SK-N-SH (cell line): ENCODE measurements at regions of chr17 and their contacts with region 1.

Region 1: DNA sequence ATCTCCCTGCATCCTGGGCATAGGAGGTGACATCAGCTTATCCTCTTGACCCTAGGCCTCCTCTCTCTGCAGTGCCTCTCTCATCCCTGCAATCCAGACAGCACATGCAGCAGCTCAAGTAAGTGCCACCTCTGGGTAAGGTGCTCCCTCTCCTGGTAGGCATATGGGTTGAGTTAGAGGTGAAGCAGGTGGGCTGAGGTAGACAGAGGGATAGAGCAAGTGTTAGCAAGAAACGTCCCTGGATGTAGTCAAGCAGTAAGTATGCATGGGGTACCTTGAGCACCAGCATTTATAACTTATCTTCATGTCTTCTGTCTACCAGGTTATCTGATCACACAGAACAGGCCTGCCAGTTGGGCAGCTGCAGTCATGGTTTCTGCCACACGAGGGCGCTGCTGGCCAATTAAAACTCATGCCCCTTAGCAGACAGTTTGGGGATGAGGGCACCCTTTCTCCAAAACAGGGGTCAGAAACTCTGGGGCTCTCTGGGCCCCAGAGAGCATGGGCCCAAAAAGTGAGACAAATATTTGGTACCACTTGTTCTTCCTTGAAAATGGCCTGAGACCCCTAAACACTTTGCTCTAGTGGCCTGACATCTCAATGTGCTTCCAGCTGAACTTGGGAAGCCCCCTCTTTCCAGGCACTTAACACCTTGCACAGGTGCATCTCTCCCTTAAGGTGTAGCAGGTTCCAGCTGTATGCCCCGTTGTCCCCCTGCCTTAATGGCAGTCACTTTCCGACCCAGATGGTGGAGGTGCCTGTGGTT is 59.8 kb downstream of the NEUROD2 start:
- DNase-seq: peak; percentile 76
- H3K4me3 ChIP-seq: no peak overlapping the region; a peak in 1 of 4 replicates
- H3K27ac ChIP-seq: no peak overlapping the region
- H3K4me1 ChIP-seq: peaks cover 8 to 9% of the 10 kb centered on the region in 2 experiments; a peak in 1 of 4 replicates
- H3K27me3 ChIP-seq: no peaks in the 10 kb centered on the region
- CTCF ChIP-seq: peak; percentile 98
- EP300 ChIP-seq: no peak
- RAD21 ChIP-seq: peak; percentile 82

Region 2: GRCh38 chr17:39450847-39451581 is 96.9 kb before region 1 on chr17 and contains the start of gene MED1:
- CTCF ChIA-PET with region 1: no interaction called
- POLR2A ChIA-PET with region 1: no interaction called
- DNase-seq: peak; percentile 88
- H3K4me3 ChIP-seq: peak within 1 kb of the TSS; percentile 67 to 87
- H3K27ac ChIP-seq: peak within 1 kb of the TSS; percentile 77 to 85
- H3K4me1 ChIP-seq: peaks cover 4% of the 10 kb centered on the region in 2 experiments; a peak in 2 of 4 replicates
- H3K27me3 ChIP-seq: no peaks in the 10 kb centered on the region
- CTCF ChIP-seq: no peak
- EP300 ChIP-seq: no peak
- RAD21 ChIP-seq: no peak
- polyA plus RNA-seq, gene MED1: 12.3 and 19.9 TPM in 2 replicates

Region 3: DNA sequence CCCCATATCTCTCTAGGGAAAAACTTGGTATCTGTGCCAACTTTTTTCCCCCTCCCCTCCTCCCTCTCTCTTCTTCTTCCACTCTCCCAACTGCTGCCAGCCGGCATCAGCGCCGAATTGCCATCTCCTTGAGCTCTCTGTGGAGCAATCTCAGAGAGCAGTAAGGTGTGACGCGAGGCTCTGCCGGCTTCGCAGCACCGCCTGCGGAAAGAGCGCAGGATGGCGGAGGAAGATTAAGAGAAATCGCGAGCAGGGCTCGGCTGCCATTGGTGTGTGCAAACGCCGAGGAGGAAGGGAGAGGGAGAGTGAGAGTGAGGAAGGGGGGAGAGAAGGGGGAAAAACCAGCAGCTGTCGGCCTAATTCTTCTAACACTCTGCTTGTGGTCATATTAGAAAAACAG is 15.6 kb after region 1 on chr17:
- CTCF ChIA-PET with region 1: interaction called, 56 read pairs
- POLR2A ChIA-PET with region 1: no interaction called
- DNase-seq: peak; percentile 55
- H3K4me3 ChIP-seq: no peak overlapping the region
- H3K27ac ChIP-seq: no peak overlapping the region
- H3K4me1 ChIP-seq: peaks cover 0 to 7% of the 10 kb centered on the region in 2 experiments; a peak in 1 of 4 replicates
- H3K27me3 ChIP-seq: no peaks in the 10 kb centered on the region
- CTCF ChIP-seq: no peak
- EP300 ChIP-seq: no peak
- RAD21 ChIP-seq: no peak

Region 4: DNA sequence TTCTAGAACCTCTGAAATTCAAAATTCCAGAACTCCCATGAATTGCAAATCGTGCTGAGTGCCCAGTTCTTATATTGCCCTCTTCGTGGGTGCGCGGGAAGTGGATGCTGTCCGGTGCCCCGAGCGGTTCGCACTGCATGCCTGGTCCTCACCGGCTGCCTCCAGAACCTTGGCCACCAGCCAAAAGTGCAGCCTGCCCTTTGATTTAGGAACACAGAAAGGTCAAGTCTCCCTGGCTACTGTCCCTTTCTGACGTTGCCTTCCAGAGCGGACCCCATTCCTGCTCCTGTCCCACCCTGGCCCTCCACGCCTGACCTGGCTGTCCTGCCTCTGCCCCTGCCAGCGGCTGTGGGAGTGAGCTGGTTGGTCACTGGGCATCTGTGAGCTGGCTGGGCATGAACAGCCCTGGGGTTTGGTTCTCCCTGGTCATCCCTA is 50.2 kb after region 1 on chr17:
- CTCF ChIA-PET with region 1: interaction called, 17 read pairs
- POLR2A ChIA-PET with region 1: no interaction called
- DNase-seq: peak; percentile 74
- H3K4me3 ChIP-seq: no peak overlapping the region
- H3K27ac ChIP-seq: no peak overlapping the region
- H3K4me1 ChIP-seq: peaks cover 7 to 32% of the 10 kb centered on the region in 2 experiments
- H3K27me3 ChIP-seq: peaks cover 84% of the 10 kb centered on the region
- CTCF ChIP-seq: no peak
- EP300 ChIP-seq: no peak
- RAD21 ChIP-seq: no peak

Region 5: GRCh38 chr17:39636927-39637736 is 89.2 kb after region 1 on chr17 and contains the start of gene STARD3:
- CTCF ChIA-PET with region 1: interaction called, 18 read pairs
- POLR2A ChIA-PET with region 1: no interaction called
- DNase-seq: peak; percentile 96
- H3K4me3 ChIP-seq: peak within 1 kb of the TSS; percentile 88 to 97
- H3K27ac ChIP-seq: peak within 1 kb of the TSS; percentile 59 to 85
- H3K4me1 ChIP-seq: peaks cover 0 to 21% of the 10 kb centered on the region in 2 experiments; a peak in 2 of 4 replicates
- H3K27me3 ChIP-seq: no peaks in the 10 kb centered on the region
- CTCF ChIP-seq: no peak
- EP300 ChIP-seq: no peak
- RAD21 ChIP-seq: no peak
- polyA plus RNA-seq, gene STARD3: 76.8 and 78.0 TPM in 2 replicates

Region 6: GRCh38 chr17:39668199-39668966 is 120.5 kb after region 1 on chr17 and contains the start of gene PNMT:
- CTCF ChIA-PET with region 1: interaction called, 14 read pairs
- POLR2A ChIA-PET with region 1: no interaction called
- DNase-seq: peak; percentile 93
- H3K4me3 ChIP-seq: peak within 1 kb of the TSS; percentile 36 to 49
- H3K27ac ChIP-seq: no peak within 1 kb of the TSS
- H3K4me1 ChIP-seq: peaks cover 0 to 12% of the 10 kb centered on the region in 2 experiments; a peak in 1 of 4 replicates
- H3K27me3 ChIP-seq: no peaks in the 10 kb centered on the region
- CTCF ChIP-seq: peak; percentile 61
- EP300 ChIP-seq: no peak
- RAD21 ChIP-seq: peak; percentile 28; the same call in 1 of the 2 replicates
- polyA plus RNA-seq, gene PNMT: 0.05 and 0.07 TPM in 2 replicates